ENCODE measurements at regions of chr1 and their contacts with region 1.

Region 1: DNA sequence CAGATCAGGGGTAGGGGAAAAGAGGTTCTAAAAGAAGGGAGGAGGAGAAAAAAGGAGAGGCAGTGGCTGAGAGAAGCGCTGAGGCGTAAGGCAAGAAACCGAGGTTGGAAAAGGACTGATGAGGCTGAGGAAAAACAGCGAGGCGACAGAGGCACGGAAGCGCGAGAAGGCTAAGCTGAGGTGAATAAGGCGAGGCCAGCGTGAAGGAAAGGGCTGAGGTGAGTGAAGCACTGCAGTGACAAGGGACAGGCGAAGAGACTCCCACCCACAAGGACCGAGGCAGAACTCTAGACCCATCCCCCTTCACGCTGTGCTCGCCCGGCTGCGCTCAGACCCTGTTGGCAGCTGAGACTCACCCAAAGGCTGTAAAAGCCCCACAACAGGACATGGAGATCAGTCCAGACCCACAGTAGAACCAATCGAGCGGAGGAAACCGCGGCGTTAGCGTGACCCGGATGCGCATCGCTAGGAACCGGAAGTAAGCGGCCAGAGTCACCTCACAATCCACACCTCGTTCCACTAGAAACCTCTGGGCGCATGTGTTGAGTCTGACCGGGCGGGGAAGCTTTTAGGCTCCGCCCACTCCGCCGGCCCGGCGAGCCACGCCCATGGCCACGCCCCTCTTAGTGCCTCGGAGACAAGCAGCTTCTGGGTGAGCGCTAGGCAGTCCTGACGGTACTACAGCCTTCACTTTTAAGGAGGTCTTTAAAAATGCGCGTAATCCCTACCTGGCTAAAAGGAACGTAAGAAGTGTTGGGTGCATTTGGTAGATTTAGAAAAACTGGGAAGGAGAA is at the start of gene EYA3:
- DNase-seq: peak; percentile 100
- H3K4me3 ChIP-seq: peak within 1 kb of the TSS; percentile 51 to 81 (median 73)
- H3K27ac ChIP-seq: peak within 1 kb of the TSS; percentile 45
- H3K4me1 ChIP-seq: peaks cover 12% of the 10 kb centered on the region
- H3K27me3 ChIP-seq: no peaks in the 10 kb centered on the region
- CTCF ChIP-seq: no peak
- POLR2A ChIP-seq: peak; percentile 96
- total RNA-seq, gene EYA3: 29.7 and 33.0 TPM in 2 replicates

Region 2: GRCh38 chr1:27830621-27831424 is 257.5 kb before region 1 on chr1 and contains the start of gene PPP1R8:
- CTCF ChIA-PET with region 1: no interaction called
- POLR2A ChIA-PET with region 1: no interaction called
- dilution Hi-C with region 1: no loop called
- intact Hi-C with region 1: no loop called
- DNase-seq: peak; percentile 96
- H3K4me3 ChIP-seq: peak within 1 kb of the TSS; percentile 90 to 93 (median 92)
- H3K27ac ChIP-seq: peak within 1 kb of the TSS; percentile 86
- H3K4me1 ChIP-seq: peaks cover 19% of the 10 kb centered on the region
- H3K27me3 ChIP-seq: no peaks in the 10 kb centered on the region
- CTCF ChIP-seq: no peak
- POLR2A ChIP-seq: peak; percentile 97
- total RNA-seq, gene PPP1R8: 45.4 and 48.5 TPM in 2 replicates

Region 3: DNA sequence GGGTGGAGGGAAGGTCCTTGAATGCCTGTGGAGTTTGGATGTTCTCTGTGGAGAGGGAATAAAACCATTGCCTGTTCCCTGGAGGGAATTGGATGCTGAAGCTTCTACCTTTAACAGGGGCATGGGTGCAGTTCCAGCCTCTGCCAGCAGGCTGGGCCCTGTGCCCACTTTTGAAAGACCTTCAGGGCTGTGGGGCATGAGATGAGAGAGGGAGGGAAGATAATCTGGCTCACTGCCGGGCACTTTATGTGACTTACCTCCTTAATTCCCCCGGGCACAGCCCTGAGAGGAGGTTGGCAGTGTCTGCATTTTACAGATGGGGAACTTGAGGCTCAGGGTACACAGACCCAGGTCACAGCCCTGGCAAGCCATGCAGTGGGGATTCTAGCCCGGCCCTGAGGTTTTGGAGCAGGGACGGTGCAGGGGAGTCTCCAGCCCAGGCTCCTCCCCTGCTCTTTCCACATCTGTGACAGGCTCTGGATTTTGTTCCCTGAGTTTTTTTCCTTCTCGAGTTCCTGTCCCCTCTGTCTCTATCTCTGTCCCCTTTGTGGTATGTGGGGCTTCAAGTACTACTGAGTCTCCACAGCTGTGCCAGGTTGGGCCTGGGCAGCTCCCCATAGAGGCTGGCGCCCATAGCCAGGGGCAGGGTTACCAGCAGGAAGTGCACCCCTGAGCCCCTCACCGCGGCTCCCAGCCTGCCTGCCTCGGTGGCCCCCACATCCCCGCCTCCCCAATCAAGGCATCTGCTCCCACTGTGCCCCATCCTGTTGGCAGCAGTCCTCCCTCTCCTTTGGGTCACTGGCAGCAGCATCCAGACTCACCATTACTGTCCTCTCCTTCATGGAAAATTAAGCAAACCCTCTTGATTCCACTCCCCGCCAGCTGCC is 230.1 kb before region 1 on chr1:
- CTCF ChIA-PET with region 1: interaction called, 16 read pairs
- POLR2A ChIA-PET with region 1: no interaction called
- dilution Hi-C with region 1: no loop called
- intact Hi-C with region 1: loop called (anchors 1 kb)
- DNase-seq: peak; percentile 81
- H3K4me3 ChIP-seq: no peak overlapping the region
- H3K27ac ChIP-seq: no peak overlapping the region
- H3K4me1 ChIP-seq: peaks cover under 1% of the 10 kb centered on the region
- H3K27me3 ChIP-seq: no peaks in the 10 kb centered on the region
- CTCF ChIP-seq: peak; percentile 93 to 97
- POLR2A ChIP-seq: no peak

Region 4: DNA sequence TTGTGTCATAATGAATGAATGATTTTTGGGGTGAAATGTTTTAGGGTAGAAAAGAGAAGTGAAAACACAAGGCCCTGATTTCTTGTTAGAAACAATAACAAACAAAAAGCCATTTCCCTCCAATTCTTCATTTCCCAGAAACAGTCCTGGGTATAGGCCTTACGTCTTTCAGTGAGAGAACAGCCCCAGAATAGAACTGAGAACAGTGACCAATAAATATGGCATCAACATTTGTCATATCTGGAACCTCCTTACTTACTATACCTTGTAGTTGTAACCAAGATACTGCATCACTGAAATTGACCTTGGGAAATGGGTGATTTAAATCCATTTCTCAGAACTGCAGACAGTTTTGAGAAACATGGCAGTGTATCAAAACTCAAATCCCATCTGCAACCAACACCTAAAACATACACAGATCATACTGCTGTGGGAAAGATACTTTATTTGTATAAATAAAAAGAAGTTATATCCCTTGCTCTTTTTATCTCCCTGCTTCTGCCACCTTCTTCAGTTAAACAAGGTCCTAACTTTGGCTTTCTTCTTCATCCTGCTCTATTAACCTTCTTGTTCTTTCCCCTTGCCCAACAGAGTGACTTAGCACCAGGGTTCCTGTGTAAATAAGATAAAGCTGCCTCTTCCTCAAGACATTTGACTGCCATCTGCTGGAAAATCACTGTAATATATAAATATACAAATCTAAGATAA is 109.1 kb before region 1 on chr1:
- CTCF ChIA-PET with region 1: interaction called, 11 read pairs
- POLR2A ChIA-PET with region 1: no interaction called
- dilution Hi-C with region 1: no loop called
- intact Hi-C with region 1: no loop called
- DNase-seq: peak; percentile 82
- H3K4me3 ChIP-seq: no peak overlapping the region
- H3K27ac ChIP-seq: peak overlapping the region; percentile 36
- H3K4me1 ChIP-seq: peaks cover 3% of the 10 kb centered on the region
- H3K27me3 ChIP-seq: no peaks in the 10 kb centered on the region
- CTCF ChIP-seq: peak; percentile 22 to 31
- POLR2A ChIP-seq: no peak

Region 5: DNA sequence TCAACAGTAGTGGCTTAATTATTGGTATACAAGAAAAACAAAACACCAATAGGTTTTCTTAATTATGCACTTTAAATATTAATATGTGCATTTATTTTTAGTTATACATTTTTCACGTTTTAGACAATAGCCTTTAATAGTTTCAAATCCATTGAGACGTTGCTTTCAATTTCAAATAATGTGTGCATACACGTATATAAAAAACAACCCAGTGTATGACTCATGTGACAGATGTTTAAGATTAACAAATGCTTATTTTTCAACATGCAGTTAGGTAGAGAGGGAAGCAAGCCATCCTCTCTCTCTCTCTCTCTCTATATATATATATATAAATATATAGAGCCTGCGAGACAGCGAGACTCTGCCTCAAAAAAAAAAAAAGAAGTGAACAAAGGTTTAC is 24.3 kb before region 1 on chr1:
- CTCF ChIA-PET with region 1: interaction called, 19 read pairs
- POLR2A ChIA-PET with region 1: interaction called, 4 read pairs
- dilution Hi-C with region 1: no loop called
- intact Hi-C with region 1: loop called (anchors 1 kb)
- DNase-seq: peak; percentile 72
- H3K4me3 ChIP-seq: peak overlapping the region in 1 of 3 experiments; percentile 62
- H3K27ac ChIP-seq: peak overlapping the region; percentile 75
- H3K4me1 ChIP-seq: peaks cover 48% of the 10 kb centered on the region
- H3K27me3 ChIP-seq: no peaks in the 10 kb centered on the region
- CTCF ChIP-seq: no peak
- POLR2A ChIP-seq: no peak

Region 6: GRCh38 chr1:28154078-28154594 is 65.8 kb after region 1 on chr1:
- CTCF ChIA-PET with region 1: interaction called, 13 read pairs
- POLR2A ChIA-PET with region 1: interaction called, 4 read pairs
- dilution Hi-C with region 1: no loop called
- intact Hi-C with region 1: no loop called
- DNase-seq: no peak
- H3K4me3 ChIP-seq: no peak overlapping the region
- H3K27ac ChIP-seq: no peak overlapping the region
- H3K4me1 ChIP-seq: no peaks in the 10 kb centered on the region
- H3K27me3 ChIP-seq: no peaks in the 10 kb centered on the region
- CTCF ChIP-seq: no peak
- POLR2A ChIP-seq: no peak

Region 7: DNA sequence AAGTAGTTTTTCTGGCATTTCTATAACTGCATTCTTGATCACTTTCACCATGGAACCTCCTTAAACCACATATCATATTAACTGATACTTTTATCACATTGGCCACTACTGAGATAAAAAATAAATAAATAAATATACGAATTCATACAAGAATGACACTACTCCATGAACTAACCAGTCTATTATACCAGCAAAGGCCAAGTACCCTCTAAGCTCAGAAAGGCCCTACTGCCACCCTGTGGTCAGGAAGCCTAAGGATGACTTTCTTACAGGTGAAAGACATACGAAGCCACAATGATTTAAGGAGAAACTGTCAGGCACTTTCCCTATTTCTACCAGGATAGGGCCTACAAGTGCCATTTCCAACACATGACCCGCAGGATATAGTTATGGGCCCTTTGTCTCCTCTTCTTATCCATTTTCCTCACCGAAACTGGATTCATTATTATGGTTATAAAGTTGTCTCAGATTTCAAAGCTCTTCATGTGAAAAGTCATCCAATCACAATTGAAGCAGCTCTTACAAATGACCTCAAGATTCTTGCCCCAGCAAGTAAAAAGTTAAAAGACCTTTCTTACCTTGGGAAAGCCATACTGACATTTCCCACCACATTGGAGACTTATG is 120.6 kb after region 1 on chr1:
- CTCF ChIA-PET with region 1: interaction called, 397 read pairs
- POLR2A ChIA-PET with region 1: interaction called, 4 read pairs
- dilution Hi-C with region 1: no loop called
- intact Hi-C with region 1: loop called (anchors 1 kb)
- DNase-seq: peak; percentile 78
- H3K4me3 ChIP-seq: no peak overlapping the region
- H3K27ac ChIP-seq: no peak overlapping the region
- H3K4me1 ChIP-seq: no peaks in the 10 kb centered on the region
- H3K27me3 ChIP-seq: no peaks in the 10 kb centered on the region
- CTCF ChIP-seq: peak; percentile 55 to 64
- POLR2A ChIP-seq: no peak

Region 8: DNA sequence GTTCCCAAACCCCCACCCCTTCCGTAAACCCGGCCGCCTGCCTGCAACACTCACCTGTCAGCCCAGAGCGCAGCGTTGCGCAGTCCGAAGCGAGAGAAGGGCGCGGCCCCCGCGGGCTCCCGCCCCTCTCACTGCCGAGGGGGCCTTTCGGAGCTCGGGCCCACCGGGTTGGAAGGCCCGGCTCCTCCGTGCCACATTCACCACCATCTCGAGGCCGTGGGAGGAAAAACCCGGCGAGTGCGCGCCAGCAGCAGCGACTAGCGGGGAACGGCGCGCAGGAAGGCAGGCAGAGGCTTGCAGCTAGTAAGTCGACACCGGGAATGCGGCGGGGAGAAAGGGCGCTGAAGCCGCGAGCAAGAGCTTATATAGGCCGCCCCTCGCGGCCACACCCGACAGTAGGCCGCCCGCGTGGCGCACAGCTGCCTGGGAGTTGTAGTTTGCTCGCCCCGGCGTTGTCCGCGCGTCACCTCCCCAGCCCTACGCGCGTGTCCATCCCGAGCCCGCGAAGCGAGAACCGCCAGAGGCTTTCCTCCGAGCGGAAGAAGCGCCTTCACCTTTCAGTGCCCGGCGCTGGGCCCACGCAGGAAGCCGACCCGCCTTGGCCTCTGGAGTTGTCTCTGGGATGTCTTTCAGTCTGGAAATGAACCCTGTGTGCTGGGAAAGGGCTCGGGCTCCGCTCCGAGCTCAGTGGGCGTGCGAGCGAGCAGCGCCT is 493.3 kb after region 1 on chr1:
- CTCF ChIA-PET with region 1: no interaction called
- POLR2A ChIA-PET with region 1: no interaction called
- dilution Hi-C with region 1: no loop called
- intact Hi-C with region 1: no loop called
- DNase-seq: peak; percentile 97
- H3K4me3 ChIP-seq: peak overlapping the region; percentile 75 to 98 (median 92)
- H3K27ac ChIP-seq: peak overlapping the region; percentile 65
- H3K4me1 ChIP-seq: peaks cover 31% of the 10 kb centered on the region
- H3K27me3 ChIP-seq: no peaks in the 10 kb centered on the region
- CTCF ChIP-seq: no peak
- POLR2A ChIP-seq: peak; percentile 100

Measured in endothelial cell of umbilical vein (primary cell).